ENCODE measurements at regions of chr2 and their contacts with region 1.

Region 1: DNA sequence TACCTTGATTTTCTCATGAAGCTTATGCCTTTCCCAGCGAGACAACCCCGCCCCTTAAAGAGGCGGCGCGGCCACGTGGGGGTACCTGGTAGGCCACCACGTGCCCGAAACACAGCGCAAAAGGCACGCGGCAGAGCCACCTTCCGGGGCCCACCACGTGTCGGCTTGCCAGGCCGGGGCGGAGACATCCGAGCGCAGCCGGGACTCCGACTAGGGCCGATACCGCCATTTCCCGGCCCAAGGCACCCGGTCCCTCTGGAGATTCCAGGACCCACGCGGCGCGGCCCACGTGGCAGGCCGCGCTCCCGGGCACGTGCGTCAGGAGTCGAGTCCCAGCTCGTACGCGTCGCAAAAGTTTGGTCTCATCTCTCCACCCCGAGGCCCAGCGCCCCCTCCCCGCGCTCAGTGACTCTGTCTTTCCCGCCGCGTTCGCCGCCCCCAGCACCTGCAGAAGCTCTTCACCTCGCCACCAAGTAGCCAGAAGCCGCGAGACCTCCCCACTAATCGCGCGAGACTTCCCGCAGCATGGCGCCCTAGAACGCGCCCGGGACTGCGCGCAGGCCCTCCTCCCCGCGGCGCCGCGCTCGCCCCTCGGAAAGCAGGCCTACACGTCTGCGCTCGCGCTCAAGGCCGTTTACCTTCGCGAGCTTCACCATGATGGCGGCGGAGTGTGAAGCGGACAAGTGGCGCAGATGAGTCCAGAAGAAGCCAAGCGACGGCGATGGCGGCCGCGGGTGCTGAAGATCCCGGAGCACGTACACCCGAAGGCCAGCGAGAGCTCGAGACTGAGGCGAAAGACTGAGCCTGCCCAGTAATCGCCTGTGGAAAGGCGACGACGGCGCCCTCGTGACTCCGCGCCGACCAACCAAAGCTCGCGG is at the start of gene NCL:
- DNase-seq: peak; percentile 79
- H3K4me3 Mint-ChIP-seq: peak within 1 kb of the TSS; percentile 99
- H3K27ac Mint-ChIP-seq: peak within 1 kb of the TSS; percentile 99
- H3K4me1 Mint-ChIP-seq: peaks cover 43% of the 10 kb centered on the region
- H3K27me3 Mint-ChIP-seq: no peaks in the 10 kb centered on the region
- total RNA-seq, gene NCL: 1,388 and 1,421 TPM in 2 replicates

Region 2: DNA sequence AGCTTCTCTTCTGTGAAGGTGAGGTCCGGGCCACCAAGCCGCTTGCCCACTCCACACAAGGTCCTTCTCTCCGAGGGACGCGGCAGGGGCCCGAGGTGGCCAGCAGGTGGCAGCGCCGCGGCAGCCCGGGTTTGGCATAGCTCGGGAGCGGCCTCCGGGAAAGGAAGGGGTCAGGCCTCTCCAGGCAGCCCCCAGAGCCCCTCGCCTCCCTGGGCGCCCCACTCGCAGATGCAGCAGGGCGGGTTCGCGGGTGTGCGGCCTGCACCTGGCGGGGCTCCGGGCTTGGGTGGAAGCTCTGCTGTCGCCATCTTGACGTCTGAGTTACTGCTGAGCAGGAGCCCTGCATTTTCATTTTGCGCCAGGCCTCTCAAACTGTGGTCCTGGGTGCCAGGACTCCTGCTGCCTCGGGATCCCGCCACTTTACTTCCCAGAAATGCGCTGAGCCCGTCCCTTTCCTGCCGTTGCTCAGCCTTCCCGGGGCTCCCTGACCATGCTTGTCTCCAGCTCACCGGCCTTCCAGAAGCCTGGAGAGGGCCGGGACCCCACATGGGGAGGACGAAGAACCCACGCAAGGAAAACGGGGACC is 19.0 kb after region 1 on chr2:
- intact Hi-C with region 1: loop called (anchors 1 kb)
- DNase-seq: peak; percentile 66
- H3K4me3 Mint-ChIP-seq: peak overlapping the region; percentile 77
- H3K27ac Mint-ChIP-seq: peak overlapping the region; percentile 86
- H3K4me1 Mint-ChIP-seq: peaks cover 6% of the 10 kb centered on the region
- H3K27me3 Mint-ChIP-seq: peaks cover 2% of the 10 kb centered on the region

Region 3: GRCh38 chr2:231604685-231605606 is 141.0 kb after region 1 on chr2:
- intact Hi-C with region 1: loop called (anchors 1 kb)
- DNase-seq: peak; percentile 95
- H3K4me3 Mint-ChIP-seq: peak overlapping the region; percentile 60
- H3K27ac Mint-ChIP-seq: peak overlapping the region; percentile 76
- H3K4me1 Mint-ChIP-seq: peaks cover 19% of the 10 kb centered on the region
- H3K27me3 Mint-ChIP-seq: peaks cover 15% of the 10 kb centered on the region

Region 4: DNA sequence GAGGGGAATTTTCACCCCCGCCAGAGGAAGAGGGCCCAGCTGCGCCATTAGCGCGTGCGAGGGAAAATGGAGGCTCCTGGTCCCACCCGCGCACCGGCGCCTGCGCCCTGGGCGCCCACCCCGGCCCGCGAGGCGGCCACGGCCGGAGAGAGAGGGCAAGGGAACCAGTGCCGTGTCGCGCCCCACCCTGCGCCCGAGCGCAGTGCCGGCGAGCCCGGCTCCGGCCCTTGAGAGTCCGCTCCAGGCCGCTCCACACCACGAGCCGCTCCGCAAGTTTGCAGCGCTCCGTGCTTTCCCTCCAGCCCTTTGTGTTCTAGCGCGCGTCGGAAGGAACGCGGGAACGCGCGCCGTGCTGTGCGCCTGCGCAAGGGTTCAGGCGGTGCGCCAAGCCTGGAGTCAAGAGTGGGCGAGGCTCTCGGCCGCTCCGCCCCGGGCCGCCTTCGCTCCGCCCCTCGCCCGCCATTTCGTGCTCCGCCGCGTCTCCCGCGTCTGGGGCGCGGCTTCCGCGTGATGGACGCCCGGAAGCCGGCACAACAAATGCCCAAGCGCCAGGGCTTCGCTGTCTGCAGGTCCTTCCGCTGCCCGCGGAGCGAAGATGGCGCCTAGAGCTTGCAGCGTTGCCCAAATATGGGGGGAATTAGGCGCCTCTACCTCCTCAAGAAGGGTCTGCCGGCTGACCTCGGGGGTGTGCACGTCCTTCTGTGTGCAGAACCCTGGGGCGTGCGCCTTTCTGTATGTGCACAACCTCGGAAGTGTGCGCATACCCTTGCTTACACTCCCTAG is 198.3 kb after region 1 on chr2:
- intact Hi-C with region 1: loop called (anchors 5 kb)
- DNase-seq: peak; percentile 98
- H3K4me3 Mint-ChIP-seq: peak overlapping the region; percentile 74
- H3K27ac Mint-ChIP-seq: peak overlapping the region; percentile 96
- H3K4me1 Mint-ChIP-seq: peaks cover 25% of the 10 kb centered on the region
- H3K27me3 Mint-ChIP-seq: no peaks in the 10 kb centered on the region

Region 5: GRCh38 chr2:231780909-231781797 is 317.2 kb after region 1 on chr2 and contains the start of gene PDE6D:
- intact Hi-C with region 1: loop called (anchors 1 kb)
- DNase-seq: peak; percentile 98
- H3K4me3 Mint-ChIP-seq: peak within 1 kb of the TSS; percentile 93
- H3K27ac Mint-ChIP-seq: peak within 1 kb of the TSS; percentile 94
- H3K4me1 Mint-ChIP-seq: peaks cover 56% of the 10 kb centered on the region
- H3K27me3 Mint-ChIP-seq: no peaks in the 10 kb centered on the region
- total RNA-seq, gene PDE6D: 31.0 and 31.9 TPM in 2 replicates